AG04450 (cell line): ENCODE measurements at regions of chr17 and their contacts with region 1.

Region 1: DNA sequence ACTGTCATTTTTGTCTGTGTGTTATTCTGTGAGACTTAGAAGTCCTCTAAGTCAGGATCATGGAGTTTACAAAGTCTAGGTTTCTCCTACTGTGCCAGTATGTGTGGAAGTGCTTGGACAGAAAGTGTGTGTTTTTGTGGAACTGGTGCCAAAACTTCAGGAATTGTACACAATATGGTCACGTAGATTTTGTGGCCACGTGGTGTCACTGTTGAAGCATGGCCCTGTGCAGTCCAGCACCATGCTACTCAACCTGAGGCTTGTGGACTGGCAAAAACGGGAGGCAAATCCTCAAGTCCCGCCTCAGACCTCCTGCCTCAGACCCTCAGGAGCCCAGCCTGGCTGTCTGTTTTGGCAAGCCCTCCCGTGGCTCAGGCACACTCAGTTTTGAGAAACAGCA is 16.7 kb upstream of the ALKBH5 start:
- DNase-seq: no peak
- H3K4me3 ChIP-seq: no peak overlapping the region
- H3K27ac ChIP-seq: no peak overlapping the region
- H3K27me3 ChIP-seq: peaks cover 11% of the 10 kb centered on the region
- CTCF ChIP-seq: no peak

Region 2: DNA sequence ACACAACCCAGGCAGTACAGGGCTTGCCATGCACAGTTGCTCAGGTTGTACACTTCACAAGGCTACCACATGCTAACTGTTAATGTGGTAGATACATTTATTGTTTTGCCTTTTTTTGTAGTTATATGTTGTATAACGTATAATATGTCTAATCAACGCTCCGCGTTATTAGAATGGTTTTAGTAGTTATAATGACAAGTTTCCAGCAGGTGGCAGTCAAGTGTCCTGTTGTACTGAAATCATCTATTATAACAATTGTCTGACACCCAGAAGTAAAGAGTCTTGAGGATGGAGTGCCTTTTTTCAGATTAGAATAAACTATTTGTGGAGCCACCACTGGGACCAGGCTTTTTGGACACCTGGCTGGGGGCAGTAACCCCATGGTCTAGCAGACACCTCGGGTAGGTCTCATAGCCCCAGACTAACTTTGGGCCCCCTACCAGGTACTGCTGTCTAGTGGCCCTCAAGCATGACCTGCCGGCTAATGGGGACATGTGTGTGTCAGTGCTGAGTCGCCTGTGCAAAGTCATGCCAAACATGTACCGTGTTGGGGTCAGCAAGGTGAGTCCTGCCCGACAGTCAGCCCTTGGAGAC is 25.6 kb before region 1 on chr17:
- CTCF ChIA-PET with region 1: interaction called, 11 read pairs
- POLR2A ChIA-PET with region 1: no interaction called
- DNase-seq: no peak
- H3K4me3 ChIP-seq: no peak overlapping the region
- H3K27ac ChIP-seq: no peak overlapping the region
- H3K27me3 ChIP-seq: peaks cover 5% of the 10 kb centered on the region
- CTCF ChIP-seq: peak; percentile 57